Ascending aorta (tissue), 2 donors: ENCODE measurements at regions of chr4 and their contacts with region 1.

Region 1: DNA sequence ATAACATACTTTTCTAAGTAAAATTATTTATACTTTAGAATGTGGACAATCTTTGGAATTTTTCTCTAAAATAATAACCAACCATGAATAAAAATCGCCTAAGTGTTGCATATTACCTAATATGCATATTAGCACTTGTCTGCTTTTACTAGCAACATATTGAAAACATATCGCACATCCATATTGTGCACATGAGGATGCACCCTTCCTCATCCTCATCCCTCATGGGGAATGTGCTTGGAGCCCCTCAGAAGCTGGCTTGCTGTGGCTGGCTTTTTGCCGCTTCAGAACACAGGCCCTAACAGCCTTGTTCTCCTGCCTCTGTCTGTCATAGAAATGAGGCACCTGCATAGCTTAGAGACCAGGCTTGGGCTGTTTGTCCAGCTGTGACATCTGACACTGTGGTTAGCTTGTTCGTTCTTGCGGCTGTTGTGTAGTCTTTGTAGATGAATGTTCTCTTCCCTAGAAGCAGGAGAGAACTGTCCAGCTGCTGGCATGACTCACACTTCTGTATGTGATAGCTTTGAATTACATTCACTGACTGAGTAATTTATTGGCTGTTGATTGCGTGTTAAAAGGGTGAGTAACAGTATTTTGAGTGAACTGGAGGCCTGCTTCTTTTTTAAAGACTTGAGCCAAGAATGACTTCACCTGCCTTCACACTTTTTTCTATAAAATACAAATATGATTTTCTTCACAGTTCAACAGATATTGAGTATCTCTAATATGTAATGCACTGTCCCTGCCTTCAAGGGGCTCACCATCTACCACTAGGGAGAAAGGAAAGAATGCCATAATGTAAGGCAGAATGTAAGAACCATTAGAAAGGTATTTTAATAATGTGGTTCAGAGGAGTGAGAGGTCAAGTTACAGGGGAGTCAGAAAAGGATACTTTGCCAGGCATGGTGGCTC is 81.9 kb downstream of the HMGB2 start:
- DNase-seq: peak; percentile 11 to 83
- H3K4me3 ChIP-seq: no peak overlapping the region
- H3K27ac ChIP-seq: peak overlapping the region in 1 of 2 donors; percentile 23
- H3K4me1 ChIP-seq: peaks cover 0 to 3% of the 10 kb centered on the region in 2 donors
- H3K27me3 ChIP-seq: no peaks in the 10 kb centered on the region
- CTCF ChIP-seq: no peak

Region 2: GRCh38 chr4:172628263-172628662 is 624.0 kb before region 1 on chr4:
- intact Hi-C with region 1: no loop called
- DNase-seq: no peak
- H3K4me3 ChIP-seq: no peak overlapping the region
- H3K27ac ChIP-seq: no peak overlapping the region
- H3K4me1 ChIP-seq: no peaks in the 10 kb centered on the region
- H3K27me3 ChIP-seq: no peaks in the 10 kb centered on the region
- CTCF ChIP-seq: no peak

Region 3: GRCh38 chr4:173168396-173169177 is 83.7 kb before region 1 on chr4 and contains the start of gene GALNT7:
- intact Hi-C with region 1: loop called (anchors 2 kb)
- DNase-seq: peak in 1 of 2 donors; percentile 80
- H3K4me3 ChIP-seq: peak within 1 kb of the TSS; percentile 70 to 98
- H3K27ac ChIP-seq: peak within 1 kb of the TSS; percentile 86 to 94
- H3K4me1 ChIP-seq: peaks cover 0 to 17% of the 10 kb centered on the region in 2 donors
- H3K27me3 ChIP-seq: no peaks in the 10 kb centered on the region
- CTCF ChIP-seq: no peak
- total RNA-seq, gene GALNT7: 8.2 TPM

Region 4: DNA sequence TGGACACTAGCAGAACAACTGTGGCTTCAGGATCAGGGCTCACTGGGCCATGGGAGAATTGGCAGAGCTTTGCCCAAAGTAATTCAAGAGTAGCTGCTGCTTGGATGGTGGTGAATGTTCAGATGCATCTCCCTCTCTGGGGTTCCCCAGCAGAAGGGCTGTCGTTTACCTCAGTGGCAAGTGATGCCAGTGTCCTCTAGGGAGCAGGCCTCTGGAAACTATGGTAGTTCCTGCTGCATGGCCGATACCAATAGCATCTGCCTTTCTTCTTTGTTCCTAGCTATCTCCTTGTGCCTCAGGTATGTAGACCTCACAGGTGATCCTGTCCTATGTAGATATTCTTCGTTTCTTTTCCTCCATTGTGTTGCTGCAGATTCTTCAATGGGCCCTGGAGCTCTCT is 55.5 kb after region 1 on chr4:
- intact Hi-C with region 1: no loop called
- DNase-seq: no peak
- H3K4me3 ChIP-seq: no peak overlapping the region
- H3K27ac ChIP-seq: no peak overlapping the region
- H3K4me1 ChIP-seq: no peaks in the 10 kb centered on the region
- H3K27me3 ChIP-seq: no peaks in the 10 kb centered on the region
- CTCF ChIP-seq: no peak